ENCODE measurements at regions of chrX and their contacts with region 1.

Region 1: GRCh38 chrX:136496770-136497598 is at the start of gene HTATSF1:
- DNase-seq: peak; percentile 71
- H3K4me3 ChIP-seq: peak within 1 kb of the TSS; percentile 53 to 56
- H3K27ac ChIP-seq: peak within 1 kb of the TSS; percentile 89 to 95
- H3K4me1 ChIP-seq: no peaks in the 10 kb centered on the region
- H3K27me3 ChIP-seq: no peaks in the 10 kb centered on the region
- CTCF ChIP-seq: no peak
- POLR2A ChIP-seq: no peak
- total RNA-seq, gene HTATSF1: 63.9 to 88.3 TPM

Region 2: DNA sequence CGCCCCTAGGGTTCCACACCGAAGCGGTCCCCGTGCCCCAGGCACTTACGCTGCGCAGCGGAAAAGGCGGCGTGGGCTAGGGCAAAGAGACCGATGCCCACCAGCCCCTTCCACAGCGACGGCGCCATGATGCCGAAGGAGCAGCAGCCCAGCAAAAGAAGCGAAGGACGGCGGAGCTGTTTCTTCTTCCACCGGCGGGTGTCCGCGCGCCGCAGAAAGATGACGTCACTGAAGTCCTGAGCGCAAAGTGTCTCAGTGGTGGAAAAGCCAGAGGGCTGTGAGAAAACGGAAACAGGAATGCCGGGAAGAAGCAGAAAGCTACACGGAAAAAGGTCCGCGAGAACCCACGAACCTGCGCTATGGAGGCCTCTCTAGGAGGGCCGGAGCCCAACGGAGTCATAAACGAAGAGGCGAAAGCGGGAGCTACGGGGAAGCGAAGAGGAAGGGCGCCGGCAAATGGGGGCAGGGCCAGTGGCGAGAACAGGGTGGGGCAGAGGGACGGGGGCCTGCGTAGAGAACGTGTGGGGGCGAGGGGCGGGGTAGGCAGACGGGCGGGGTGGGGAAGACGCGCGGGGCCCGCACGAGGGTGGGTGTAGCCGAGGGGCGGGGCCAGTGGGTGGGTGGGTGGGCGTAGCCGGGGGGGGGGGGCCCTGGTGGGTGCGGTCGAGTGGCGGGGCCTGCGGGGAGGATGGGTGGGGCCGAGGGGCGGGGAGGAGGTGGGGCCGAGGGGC is 523.3 kb before region 1 on chrX and contains the start of gene MMGT1:
- intact Hi-C with region 1: loop called (anchors 5 kb)
- DNase-seq: peak; percentile 68
- H3K4me3 ChIP-seq: peak within 1 kb of the TSS; percentile 51 to 55
- H3K27ac ChIP-seq: peak within 1 kb of the TSS; percentile 85 to 89
- H3K4me1 ChIP-seq: no peaks in the 10 kb centered on the region
- H3K27me3 ChIP-seq: no peaks in the 10 kb centered on the region
- CTCF ChIP-seq: no peak
- POLR2A ChIP-seq: no peak
- total RNA-seq, gene MMGT1: 13.7 to 18.3 TPM

Measured in prostate gland (tissue), 2 donors.